K562 (cell line): ENCODE measurements at regions of chr15 and their contacts with region 1.

Region 1: DNA sequence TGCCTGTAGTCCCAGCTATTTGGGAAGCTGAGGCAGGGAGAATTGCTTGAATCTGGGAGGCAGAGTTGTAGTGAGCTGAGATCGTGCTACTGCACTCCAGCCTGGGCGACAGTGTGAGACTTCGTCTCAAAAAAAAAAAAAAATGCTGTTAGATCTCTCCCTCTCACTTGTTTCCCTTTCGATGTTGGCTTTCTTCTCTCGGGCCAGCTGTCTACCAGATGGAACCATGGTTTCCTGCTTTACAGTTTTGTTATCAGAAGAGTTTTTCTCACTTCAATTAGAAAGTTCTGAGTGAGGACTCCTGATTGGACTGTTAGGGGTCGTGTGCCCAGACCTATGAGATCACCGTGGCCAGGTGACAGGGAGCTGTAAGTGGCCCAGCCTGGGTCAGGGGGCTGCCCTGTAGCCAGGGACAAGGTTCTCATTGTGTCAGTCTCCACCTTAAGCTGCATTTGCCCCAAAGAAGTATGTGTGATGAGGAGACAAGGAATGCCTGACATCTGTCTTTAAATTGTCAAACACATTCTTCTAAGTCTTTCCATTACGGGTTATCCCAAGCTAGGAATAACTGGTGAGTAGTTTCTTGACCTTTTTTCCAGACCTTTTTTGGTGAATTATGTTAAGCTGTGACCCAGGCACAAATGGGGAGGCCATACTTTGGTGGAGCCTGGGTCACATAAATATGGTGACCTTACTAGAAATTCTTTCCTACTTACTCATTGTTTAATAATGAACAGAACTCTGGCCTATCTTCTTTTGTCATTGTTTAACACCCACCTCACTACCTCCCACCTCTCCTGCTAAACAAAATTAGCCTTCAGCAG is 25.2 kb downstream of the SNAPC5 start:
- DNase-seq: no peak
- ATAC-seq: no peak
- H3K4me3 ChIP-seq: no peak overlapping the region
- H3K27ac ChIP-seq: no peak overlapping the region
- H3K4me1 ChIP-seq: no peaks in the 10 kb centered on the region
- H3K27me3 ChIP-seq: no peaks in the 10 kb centered on the region
- CTCF ChIP-seq: no peak
- EP300 ChIP-seq: no peak
- POLR2A ChIP-seq: no peak
- RAD21 ChIP-seq: no peak

Region 2: DNA sequence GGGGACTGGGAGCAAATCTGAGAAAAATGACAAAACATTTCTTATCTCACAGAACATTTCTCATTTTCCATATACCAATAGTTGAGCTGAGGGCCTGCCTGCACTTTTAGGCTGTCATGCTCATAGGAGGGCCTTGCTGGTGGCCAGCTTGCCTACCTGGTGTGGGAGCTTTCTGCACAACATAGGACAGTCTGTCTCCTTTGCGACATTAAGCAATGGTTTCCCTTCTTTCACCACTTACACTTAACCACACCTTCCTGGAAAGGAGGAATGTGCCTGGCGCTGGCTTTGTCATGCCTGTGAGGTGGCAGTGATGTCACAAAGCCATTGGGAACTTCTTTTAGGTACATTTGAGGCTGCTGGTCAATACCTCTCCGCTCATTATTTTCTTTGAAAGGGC is 19.5 kb after region 1 on chr15:
- CTCF ChIA-PET with region 1: no interaction called
- POLR2A ChIA-PET with region 1: interaction called, 14 read pairs
- in situ Hi-C with region 1: no loop called
- intact Hi-C with region 1: no loop called
- DNase-seq: peak in 1 of 4 experiments; percentile 27
- ATAC-seq: peak; percentile 45; the same call in 2 of the 3 replicates
- H3K4me3 ChIP-seq: no peak overlapping the region
- H3K27ac ChIP-seq: 0 out of 3 replicates have a peak overlapping the region, but pooled peaks have one; percentile 1
- H3K4me1 ChIP-seq: peaks cover 4 to 8% of the 10 kb centered on the region in 2 experiments; a peak in 3 of 5 replicates
- H3K27me3 ChIP-seq: no peaks in the 10 kb centered on the region
- CTCF ChIP-seq: no peak
- EP300 ChIP-seq: no peak
- POLR2A ChIP-seq: 0 out of 2 replicates have a peak, but pooled peaks have one; percentile 51
- RAD21 ChIP-seq: no peak

Region 3: GRCh38 chr15:66588537-66588936 is 116.1 kb after region 1 on chr15:
- CTCF ChIA-PET with region 1: no interaction called
- POLR2A ChIA-PET with region 1: no interaction called
- in situ Hi-C with region 1: no loop called
- intact Hi-C with region 1: no loop called
- DNase-seq: peak; percentile 47 to 73 (median 55)
- ATAC-seq: peak; percentile 80
- H3K4me3 ChIP-seq: no peak overlapping the region
- H3K27ac ChIP-seq: no peak overlapping the region
- H3K4me1 ChIP-seq: peaks cover 55 to 59% of the 10 kb centered on the region in 2 experiments
- H3K27me3 ChIP-seq: no peaks in the 10 kb centered on the region
- CTCF ChIP-seq: peak; percentile 61 to 85 (median 71)
- EP300 ChIP-seq: no peak
- POLR2A ChIP-seq: no peak
- RAD21 ChIP-seq: peak in 1 of 2 experiments; percentile 61